ENCODE measurements at regions of chr2 and their contacts with region 1.

Region 1: GRCh38 chr2:241665727-241666440 is 20.7 kb downstream of the DTYMK start:
- DNase-seq: no peak
- H3K4me3 ChIP-seq: no peak overlapping the region
- H3K27ac ChIP-seq: no peak overlapping the region
- H3K4me1 ChIP-seq: no peaks in the 10 kb centered on the region
- CTCF ChIP-seq: 0 out of 2 replicates have a peak, but pooled peaks have one; percentile 24

Region 2: GRCh38 chr2:241703032-241703604 is 37.2 kb after region 1 on chr2:
- CTCF ChIA-PET with region 1: no interaction called
- POLR2A ChIA-PET with region 1: no interaction called
- intact Hi-C with region 1: no loop called
- DNase-seq: no peak
- H3K4me3 ChIP-seq: peak overlapping the region; percentile 94
- H3K27ac ChIP-seq: peak overlapping the region; percentile 32
- H3K4me1 ChIP-seq: peaks cover 23% of the 10 kb centered on the region
- CTCF ChIP-seq: no peak; the same call in 1 of the 2 replicates

Region 3: DNA sequence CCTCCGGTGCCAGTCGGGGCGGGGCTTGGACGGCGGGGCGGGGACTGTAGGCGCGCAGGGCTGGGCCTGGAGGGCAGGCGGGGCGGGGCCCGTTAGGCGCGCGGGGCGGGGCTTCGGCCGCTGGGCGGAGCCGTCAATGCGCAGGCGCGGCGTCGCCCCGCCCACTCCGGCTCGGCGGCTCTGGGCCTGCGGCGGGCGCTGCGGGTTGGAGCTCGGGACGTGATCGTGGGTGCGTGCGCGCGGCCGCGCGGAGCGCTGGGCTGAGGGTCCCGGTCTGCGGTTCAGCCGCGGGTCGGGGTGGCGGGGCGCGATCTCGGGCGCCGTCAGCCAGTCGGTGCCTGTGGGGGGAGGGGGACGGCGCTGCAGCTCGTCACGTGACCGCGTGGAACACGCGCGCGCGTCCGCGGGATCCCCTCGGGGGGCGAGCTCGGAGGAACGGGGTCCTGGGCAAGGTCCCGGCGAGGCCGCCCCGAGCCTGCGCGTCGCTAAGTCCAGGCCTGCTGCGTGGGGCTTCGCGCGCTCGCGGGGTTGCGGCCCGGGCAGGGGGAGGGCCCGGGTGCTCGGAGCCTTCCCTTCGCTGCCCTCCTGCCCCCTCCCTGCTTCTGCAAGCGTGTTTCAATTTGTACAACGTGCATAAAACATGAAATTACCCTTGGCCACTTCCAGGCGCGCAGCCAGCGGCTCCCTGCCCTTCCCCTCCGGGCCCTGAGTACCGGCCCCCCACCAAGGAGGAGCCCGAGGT is 68.8 kb after region 1 on chr2 and contains the start of gene D2HGDH:
- CTCF ChIA-PET with region 1: no interaction called
- POLR2A ChIA-PET with region 1: no interaction called
- intact Hi-C with region 1: loop called (anchors 1 kb)
- DNase-seq: peak; percentile 90
- H3K4me3 ChIP-seq: peak within 1 kb of the TSS; percentile 81
- H3K27ac ChIP-seq: peak within 1 kb of the TSS; percentile 48
- H3K4me1 ChIP-seq: peaks cover 22% of the 10 kb centered on the region
- CTCF ChIP-seq: no peak
- total RNA-seq, gene D2HGDH: 19.4 and 23.2 TPM in 2 replicates